Activated CD8-positive, alpha-beta T cell treated with anti-CD3 and anti-CD28 coated beads, Interleukin-2, amount 10 ng/mL, durations not matched to agents 7 days and 5 days (primary cell): ENCODE measurements at regions of chr12 and their contacts with region 1.

Region 1: GRCh38 chr12:57904848-57905811 is 36.2 kb upstream of the ATP23 start:
- DNase-seq: peak; percentile 88
- ATAC-seq: peak; percentile 92
- H3K4me3 Mint-ChIP-seq: no peak overlapping the region
- H3K27ac Mint-ChIP-seq: no peak overlapping the region
- H3K4me1 Mint-ChIP-seq: peaks cover 6% of the 10 kb centered on the region
- H3K27me3 Mint-ChIP-seq: peaks cover 29% of the 10 kb centered on the region

Region 2: DNA sequence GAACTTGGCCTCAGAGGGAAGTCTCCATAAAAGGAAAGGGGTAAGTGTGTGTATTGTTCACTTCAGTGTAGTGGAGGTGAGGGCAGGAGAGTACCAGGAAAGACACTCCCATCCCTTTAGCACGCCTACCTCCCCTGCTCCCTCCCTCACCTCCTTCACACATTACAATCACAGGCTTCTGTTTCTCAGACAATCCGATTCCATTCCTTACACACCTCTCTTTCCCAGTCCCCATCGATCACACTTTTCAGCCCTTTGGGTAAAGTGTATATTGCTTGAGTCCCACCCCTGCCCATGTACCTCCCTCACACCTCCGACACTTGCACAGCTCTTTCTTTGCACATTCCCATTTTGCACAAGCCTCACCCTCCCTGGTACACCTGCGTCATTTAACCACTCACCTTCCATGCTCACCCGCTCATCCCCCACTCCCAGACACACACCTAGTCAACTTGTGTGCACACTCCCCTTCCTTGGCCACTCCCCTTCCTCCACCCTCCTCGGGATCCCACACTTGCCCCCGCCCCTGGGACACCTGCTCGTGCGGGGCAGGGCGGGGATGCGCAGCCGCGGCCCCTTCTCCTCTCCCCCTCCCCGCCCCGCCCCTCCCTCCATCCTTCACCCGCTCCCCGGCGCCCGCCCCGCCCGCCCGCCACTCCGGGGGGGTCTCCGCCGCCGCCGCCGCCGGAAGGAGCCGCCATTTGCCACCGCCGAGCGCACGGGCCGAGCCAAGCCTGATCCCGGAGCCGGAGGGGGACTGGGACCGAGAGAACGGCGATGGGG is 150.5 kb before region 1 on chr12 and contains the start of gene MARCHF9:
- CTCF ChIA-PET with region 1: interaction called, 46 read pairs
- POLR2A ChIA-PET with region 1: no interaction called
- DNase-seq: peak; percentile 90
- ATAC-seq: peak; percentile 46
- H3K4me3 Mint-ChIP-seq: peak within 1 kb of the TSS; percentile 80
- H3K27ac Mint-ChIP-seq: peak within 1 kb of the TSS; percentile 81
- H3K4me1 Mint-ChIP-seq: peaks cover 54% of the 10 kb centered on the region
- H3K27me3 Mint-ChIP-seq: no peaks in the 10 kb centered on the region
- total RNA-seq, gene MARCHF9: 23.6 to 24.4 TPM

Region 3: GRCh38 chr12:57782608-57783465 is 122.3 kb before region 1 on chr12 and contains the start of gene TSFM:
- CTCF ChIA-PET with region 1: interaction called, 11 read pairs
- POLR2A ChIA-PET with region 1: no interaction called
- DNase-seq: peak; percentile 98
- ATAC-seq: peak; percentile 87
- H3K4me3 Mint-ChIP-seq: peak within 1 kb of the TSS; percentile 99
- H3K27ac Mint-ChIP-seq: peak within 1 kb of the TSS; percentile 96
- H3K4me1 Mint-ChIP-seq: peaks cover 40% of the 10 kb centered on the region
- H3K27me3 Mint-ChIP-seq: no peaks in the 10 kb centered on the region
- total RNA-seq, gene TSFM: 35.0 to 35.8 TPM

Region 4: DNA sequence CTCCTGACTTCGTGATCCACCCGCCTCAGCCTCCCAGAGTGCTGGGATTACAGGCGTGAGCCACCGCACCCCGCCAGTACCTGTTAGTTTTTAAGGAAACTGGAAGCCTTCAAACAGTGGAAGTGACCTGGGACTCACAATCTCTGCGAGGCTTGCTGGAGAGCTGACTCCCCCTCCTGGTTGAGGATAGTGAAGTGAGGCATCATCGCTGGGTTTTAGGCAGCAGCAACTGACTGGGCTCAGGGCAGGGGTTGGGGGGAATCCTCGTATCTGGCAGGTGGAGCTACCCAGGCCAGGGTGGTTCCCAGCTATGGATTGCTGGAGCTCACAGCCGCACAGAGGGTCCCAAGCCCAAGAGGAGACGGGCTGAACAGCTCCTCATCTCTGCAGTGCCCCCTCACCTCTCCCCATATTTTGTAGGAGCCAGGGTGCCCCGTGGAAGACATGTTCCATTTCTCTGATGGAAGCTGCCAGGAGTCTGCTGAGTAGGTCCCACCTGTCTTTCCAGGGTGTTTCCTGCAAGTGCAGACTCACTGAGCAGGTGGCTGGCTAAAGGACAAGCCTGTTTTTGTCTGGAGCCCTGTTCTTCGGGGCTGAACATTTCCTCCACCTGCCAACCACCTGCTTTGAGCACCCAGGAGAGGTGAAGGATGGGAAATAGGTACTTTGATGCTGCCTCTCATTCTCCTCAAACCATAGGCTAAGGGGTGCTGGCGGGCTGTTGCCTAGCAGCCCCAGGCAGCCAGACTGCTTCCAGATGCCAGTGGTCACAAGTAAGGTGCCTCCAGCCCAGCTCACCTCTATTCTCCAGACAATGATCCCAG is 89.7 kb before region 1 on chr12:
- CTCF ChIA-PET with region 1: interaction called, 14 read pairs
- POLR2A ChIA-PET with region 1: interaction called, 3 read pairs
- DNase-seq: no peak
- ATAC-seq: no peak
- H3K4me3 Mint-ChIP-seq: no peak overlapping the region
- H3K27ac Mint-ChIP-seq: peak overlapping the region; percentile 20
- H3K4me1 Mint-ChIP-seq: no peaks in the 10 kb centered on the region
- H3K27me3 Mint-ChIP-seq: no peaks in the 10 kb centered on the region

Region 5: DNA sequence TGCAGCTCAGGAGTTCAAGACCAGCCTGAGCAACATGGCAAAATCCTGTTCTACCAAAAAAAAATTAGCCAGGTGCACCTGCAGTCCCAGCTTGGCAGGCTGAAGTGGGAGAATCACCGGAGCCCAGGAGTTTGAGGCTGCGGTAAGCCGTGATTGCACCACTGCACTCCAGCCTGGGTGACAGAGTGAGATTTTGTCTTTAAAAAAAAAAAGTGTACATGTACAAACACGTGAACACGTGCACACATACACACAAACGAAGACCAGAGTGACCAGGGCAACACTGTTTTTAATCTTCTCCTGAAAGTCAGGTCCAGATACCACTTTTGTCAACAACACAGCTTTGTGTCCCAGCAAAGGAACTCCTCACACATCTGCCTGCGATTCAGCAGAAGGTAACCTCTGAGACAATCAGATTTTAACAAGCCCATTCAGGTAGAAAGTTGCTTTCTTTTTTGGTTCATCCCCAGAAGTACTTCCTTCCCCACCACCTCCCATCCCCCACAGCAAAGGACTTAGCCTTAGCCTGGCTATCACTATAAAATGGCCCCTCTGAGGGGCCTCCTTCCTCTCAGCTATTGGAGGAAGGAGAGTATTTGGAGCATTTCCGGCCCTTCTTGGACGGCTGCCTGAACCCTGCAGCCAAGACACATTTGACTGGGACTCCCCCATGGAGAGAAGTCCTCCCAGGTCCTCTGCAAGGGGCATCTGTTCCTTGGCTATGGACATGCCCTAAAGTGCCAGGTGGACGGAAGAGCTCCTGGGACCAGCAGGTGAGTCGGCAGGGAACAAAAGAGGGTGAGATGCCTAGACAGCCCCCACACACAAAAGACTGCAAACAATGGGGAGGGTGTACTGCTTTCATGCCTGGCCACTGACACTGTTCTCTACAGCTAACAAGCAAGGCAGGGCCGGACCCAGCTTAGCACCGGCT is 68.4 kb before region 1 on chr12:
- CTCF ChIA-PET with region 1: interaction called, 119 read pairs
- POLR2A ChIA-PET with region 1: interaction called, 3 read pairs
- DNase-seq: peak; percentile 70
- ATAC-seq: peak; percentile 49
- H3K4me3 Mint-ChIP-seq: peak overlapping the region; percentile 45
- H3K27ac Mint-ChIP-seq: peak overlapping the region; percentile 90
- H3K4me1 Mint-ChIP-seq: peaks cover 93% of the 10 kb centered on the region
- H3K27me3 Mint-ChIP-seq: no peaks in the 10 kb centered on the region

Region 6: GRCh38 chr12:57865090-57865751 is 39.9 kb before region 1 on chr12:
- CTCF ChIA-PET with region 1: interaction called, 13 read pairs
- POLR2A ChIA-PET with region 1: no interaction called
- DNase-seq: peak; percentile 60
- ATAC-seq: peak; percentile 85
- H3K4me3 Mint-ChIP-seq: peak overlapping the region; percentile 69
- H3K27ac Mint-ChIP-seq: no peak overlapping the region
- H3K4me1 Mint-ChIP-seq: peaks cover 8% of the 10 kb centered on the region
- H3K27me3 Mint-ChIP-seq: peaks cover 20% of the 10 kb centered on the region

Region 7: DNA sequence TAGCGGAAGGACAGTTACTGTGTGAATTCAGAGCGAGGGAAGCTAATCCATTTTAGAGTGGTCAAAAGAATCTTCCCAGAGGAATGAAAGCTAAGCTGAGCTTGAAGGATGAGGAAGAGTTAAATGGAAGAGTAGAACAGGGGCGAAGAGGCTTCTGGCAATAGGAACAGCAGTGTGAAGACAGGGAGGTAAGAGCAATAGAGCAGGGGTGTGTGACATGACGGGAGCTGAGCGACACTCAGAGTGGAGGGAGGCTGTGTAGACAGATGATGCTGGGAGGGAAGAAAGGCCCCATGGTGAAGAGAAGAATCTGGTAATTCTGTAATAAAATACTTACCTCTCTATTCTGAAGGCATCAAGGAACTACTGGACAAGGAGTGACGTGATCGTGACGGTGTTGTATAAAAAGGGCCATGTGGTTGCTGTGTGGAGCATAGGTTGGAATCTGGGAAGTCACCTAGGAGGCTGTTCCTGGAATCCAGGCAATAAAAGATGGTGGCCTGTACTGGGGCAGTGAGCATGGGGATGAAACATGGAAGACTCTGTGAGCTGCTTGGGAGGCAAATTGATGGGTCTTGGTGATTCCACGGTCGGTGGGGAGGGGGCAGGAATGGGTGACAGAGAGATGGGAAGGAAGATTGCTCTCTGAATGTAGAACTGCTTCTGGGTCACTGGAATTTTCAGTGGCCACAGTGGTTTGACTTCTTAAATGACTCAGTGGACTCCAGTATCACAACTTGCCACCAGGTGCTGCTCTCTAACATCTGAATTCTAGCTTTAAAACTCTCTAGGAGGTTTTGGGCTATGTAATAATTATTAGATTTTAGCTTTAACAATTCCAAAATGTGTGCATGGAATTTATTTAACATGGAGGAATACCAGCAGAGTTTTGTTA is 200.3 kb after region 1 on chr12:
- CTCF ChIA-PET with region 1: no interaction called
- POLR2A ChIA-PET with region 1: no interaction called
- DNase-seq: no peak
- ATAC-seq: no peak
- H3K4me3 Mint-ChIP-seq: no peak overlapping the region
- H3K27ac Mint-ChIP-seq: no peak overlapping the region
- H3K4me1 Mint-ChIP-seq: no peaks in the 10 kb centered on the region
- H3K27me3 Mint-ChIP-seq: peaks cover 2% of the 10 kb centered on the region